Activated T-helper 1 cell treated with anti-CD3 and anti-CD28 coated beads, Interleukin-12 subunit alpha, Interleukin-12 subunit beta, Interleukin-2, Interleukin-4 antibody, amounts not matched to agents 30 ng/mL and 10 ng/mL and 1 ng/mL, durations not matched to agents 14 hours and 24 hours and 36 hours (primary cell): ENCODE measurements at regions of chr22 and their contacts with region 1.

Region 1: GRCh38 chr22:37566903-37567820 is 6.9 kb downstream of the CDC42EP1 start:
- DNase-seq: peak; percentile 87
- H3K4me3 Mint-ChIP-seq: peak overlapping the region; percentile 51
- H3K27ac Mint-ChIP-seq: peak overlapping the region; percentile 73
- H3K4me1 Mint-ChIP-seq: peaks cover 34% of the 10 kb centered on the region
- H3K27me3 Mint-ChIP-seq: peaks cover 22% of the 10 kb centered on the region

Region 2: DNA sequence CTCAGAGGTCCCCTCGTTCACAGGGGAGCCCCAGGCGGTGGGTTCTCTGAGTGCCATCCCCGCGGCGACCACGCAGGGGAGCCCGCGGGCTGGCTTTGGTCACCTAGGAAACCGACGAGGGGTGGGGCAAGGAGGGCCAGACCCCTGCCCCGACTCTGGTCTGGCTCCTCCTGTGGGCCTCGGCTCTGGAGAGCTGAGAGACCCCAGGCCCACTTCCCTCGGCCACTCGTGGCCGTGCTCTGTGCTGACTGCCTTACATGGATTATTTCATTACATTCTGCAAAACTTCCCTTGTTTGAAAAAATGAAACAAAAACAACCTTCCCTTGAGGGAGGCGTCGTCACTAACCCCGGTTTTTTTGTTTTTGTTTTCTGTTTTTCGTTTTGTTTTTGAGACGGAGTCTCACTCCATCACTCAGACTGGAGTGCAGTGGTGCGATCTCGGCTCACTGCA is 300.0 kb before region 1 on chr22:
- intact Hi-C with region 1: loop called (anchors 2 kb)
- DNase-seq: peak; percentile 74
- H3K4me3 Mint-ChIP-seq: peak overlapping the region; percentile 86
- H3K27ac Mint-ChIP-seq: peak overlapping the region; percentile 96
- H3K4me1 Mint-ChIP-seq: peaks cover 24% of the 10 kb centered on the region
- H3K27me3 Mint-ChIP-seq: peaks cover 4% of the 10 kb centered on the region

Region 3: GRCh38 chr22:37486224-37486845 is 80.8 kb before region 1 on chr22 and contains the start of gene MFNG:
- intact Hi-C with region 1: loop called (anchors 1 kb)
- DNase-seq: peak; percentile 69
- H3K4me3 Mint-ChIP-seq: peak within 1 kb of the TSS; percentile 92
- H3K27ac Mint-ChIP-seq: peak within 1 kb of the TSS; percentile 93
- H3K4me1 Mint-ChIP-seq: peaks cover 44% of the 10 kb centered on the region
- H3K27me3 Mint-ChIP-seq: no peaks in the 10 kb centered on the region
- total RNA-seq, gene MFNG: 213 and 214 TPM in 2 replicates

Region 4: GRCh38 chr22:37544955-37545699 is 22.0 kb before region 1 on chr22:
- intact Hi-C with region 1: loop called (anchors 1 kb)
- DNase-seq: peak; percentile 30
- H3K4me3 Mint-ChIP-seq: no peak overlapping the region
- H3K27ac Mint-ChIP-seq: peak overlapping the region; percentile 46
- H3K4me1 Mint-ChIP-seq: peaks cover 32% of the 10 kb centered on the region
- H3K27me3 Mint-ChIP-seq: peaks cover 11% of the 10 kb centered on the region

Region 5: DNA sequence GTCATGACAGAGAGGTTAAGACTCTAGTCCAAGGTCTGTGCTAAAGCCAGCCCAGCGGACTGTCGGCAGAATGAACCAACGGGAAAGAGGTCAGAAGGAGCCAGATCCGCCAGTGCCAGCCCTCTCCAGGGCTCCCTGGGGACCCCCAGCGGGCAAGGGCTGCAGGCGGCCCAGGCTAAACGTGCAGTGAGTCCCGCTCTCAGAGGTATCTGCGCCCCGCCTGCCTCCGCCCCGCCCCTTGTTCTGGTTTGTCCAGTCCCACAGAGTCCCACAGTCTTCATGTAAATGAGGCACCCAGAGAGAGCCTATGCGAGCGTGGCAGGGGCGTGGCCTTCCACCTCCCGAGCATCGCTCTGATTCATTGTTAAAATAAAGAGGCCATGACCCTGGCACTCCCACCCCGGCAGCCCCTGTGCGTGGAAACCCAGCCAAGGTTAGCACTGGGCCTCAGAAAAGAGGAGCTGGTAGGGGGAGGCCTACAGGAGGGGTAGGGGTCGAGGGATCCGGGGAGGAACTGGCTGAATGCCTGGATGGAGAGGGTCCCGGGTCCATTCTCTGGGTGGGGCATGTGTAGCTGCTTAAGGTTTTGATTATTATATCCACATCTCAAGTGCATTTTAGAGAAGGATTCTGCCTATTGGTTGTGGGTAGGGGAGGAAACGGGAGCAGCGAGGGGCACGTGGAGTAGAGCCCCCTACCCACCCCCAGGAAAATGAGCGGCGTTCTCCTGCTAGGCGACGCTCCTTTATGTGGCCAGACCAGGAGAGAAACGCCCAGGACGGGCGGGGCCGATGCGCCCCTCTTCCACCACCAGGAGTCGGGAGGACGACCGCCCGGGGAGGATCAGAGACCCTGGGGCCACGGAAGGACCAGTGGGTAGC is 129.7 kb after region 1 on chr22 and contains the start of gene TRIOBP:
- intact Hi-C with region 1: no loop called
- DNase-seq: peak; percentile 85
- H3K4me3 Mint-ChIP-seq: peak within 1 kb of the TSS; percentile 65
- H3K27ac Mint-ChIP-seq: peak within 1 kb of the TSS; percentile 58
- H3K4me1 Mint-ChIP-seq: peaks cover 16% of the 10 kb centered on the region
- H3K27me3 Mint-ChIP-seq: no peaks in the 10 kb centered on the region
- total RNA-seq, gene TRIOBP: 32.7 and 32.9 TPM in 2 replicates